Activated CD4-positive, alpha-beta memory T cell treated with anti-CD3 and anti-CD28 coated beads, Interleukin-2, amount 10 ng/mL, durations not matched to agents 7 days and 5 days (primary cell): ENCODE measurements at regions of chr17 and their contacts with region 1.

Region 1: DNA sequence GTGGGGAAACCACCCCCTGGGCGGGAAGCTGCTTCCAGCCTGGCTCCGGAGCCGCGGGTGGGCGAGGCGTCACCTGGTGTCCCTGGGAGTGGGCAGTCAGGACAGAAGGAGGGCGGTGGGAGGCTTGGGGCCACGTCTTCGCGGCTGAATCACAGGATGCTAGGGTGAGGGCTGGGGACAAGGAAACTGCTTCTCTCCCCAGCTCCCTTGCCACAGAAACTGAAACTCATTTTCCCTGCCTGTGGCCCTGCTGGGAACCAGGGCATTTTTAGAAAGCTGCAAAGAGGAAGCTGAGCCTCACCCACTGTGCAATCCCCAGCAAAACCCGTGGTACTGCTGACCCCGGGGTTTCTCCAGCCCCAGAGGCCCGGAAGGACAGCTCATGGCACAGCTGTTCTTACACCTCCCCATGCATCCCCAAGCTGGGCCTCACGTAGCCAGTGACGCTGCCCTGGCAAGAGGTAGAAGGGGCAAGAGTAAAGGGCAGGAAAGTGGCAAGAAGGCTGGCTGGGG is 8.2 kb downstream of the RHBDF2 start:
- DNase-seq: peak; percentile 67
- H3K4me3 Mint-ChIP-seq: peak overlapping the region; percentile 68
- H3K27ac Mint-ChIP-seq: peak overlapping the region; percentile 94
- H3K4me1 Mint-ChIP-seq: peaks cover 68% of the 10 kb centered on the region
- H3K27me3 Mint-ChIP-seq: no peaks in the 10 kb centered on the region

Region 2: DNA sequence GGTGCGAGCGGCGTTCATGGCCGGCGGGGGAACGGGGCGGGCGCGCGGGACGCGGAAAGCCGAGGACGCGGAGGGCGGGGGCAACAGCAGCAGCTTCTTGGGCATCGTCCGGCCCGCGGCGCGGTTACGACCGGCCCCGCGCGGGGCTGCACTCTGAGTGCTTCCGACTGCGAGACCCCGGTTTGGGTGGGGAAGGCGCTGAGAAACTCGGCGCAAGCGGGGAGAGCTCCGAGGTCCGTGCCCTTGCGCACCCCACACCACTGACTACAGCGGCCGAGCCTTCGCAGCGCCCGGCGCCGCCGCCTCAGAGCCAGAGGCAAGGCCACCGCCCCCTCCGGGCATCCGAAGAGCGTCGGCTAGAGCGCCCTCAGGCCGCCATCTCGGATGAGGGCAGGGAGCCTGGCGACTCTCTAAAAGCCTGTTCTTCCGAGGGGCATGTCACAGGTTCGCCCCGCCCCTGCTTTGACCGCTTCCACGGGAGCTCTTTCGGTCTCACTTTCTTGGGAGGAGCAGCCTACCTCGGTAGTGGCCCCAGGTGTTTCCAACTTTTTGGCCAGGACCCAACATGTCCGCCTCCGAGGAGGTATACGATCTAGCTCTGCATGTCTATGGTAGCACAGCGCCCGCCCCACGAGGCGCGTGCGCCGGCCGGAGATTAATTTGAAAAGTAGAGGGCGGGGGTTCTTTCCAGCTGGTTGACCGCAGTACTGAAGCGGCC is 139.3 kb before region 1 on chr17 and contains the start of gene PRPSAP1:
- CTCF ChIA-PET with region 1: no interaction called
- POLR2A ChIA-PET with region 1: interaction called, 11 read pairs
- DNase-seq: peak; percentile 84
- H3K4me3 Mint-ChIP-seq: peak within 1 kb of the TSS; percentile 94
- H3K27ac Mint-ChIP-seq: peak within 1 kb of the TSS; percentile 97
- H3K4me1 Mint-ChIP-seq: peaks cover 30% of the 10 kb centered on the region
- H3K27me3 Mint-ChIP-seq: no peaks in the 10 kb centered on the region
- total RNA-seq, gene PRPSAP1: 59.9 to 66.7 TPM

Region 3: GRCh38 chr17:76391200-76391715 is 101.8 kb before region 1 on chr17:
- CTCF ChIA-PET with region 1: no interaction called
- POLR2A ChIA-PET with region 1: no interaction called
- DNase-seq: no peak
- H3K4me3 Mint-ChIP-seq: no peak overlapping the region
- H3K27ac Mint-ChIP-seq: no peak overlapping the region
- H3K4me1 Mint-ChIP-seq: peaks cover under 1% of the 10 kb centered on the region
- H3K27me3 Mint-ChIP-seq: no peaks in the 10 kb centered on the region

Region 4: DNA sequence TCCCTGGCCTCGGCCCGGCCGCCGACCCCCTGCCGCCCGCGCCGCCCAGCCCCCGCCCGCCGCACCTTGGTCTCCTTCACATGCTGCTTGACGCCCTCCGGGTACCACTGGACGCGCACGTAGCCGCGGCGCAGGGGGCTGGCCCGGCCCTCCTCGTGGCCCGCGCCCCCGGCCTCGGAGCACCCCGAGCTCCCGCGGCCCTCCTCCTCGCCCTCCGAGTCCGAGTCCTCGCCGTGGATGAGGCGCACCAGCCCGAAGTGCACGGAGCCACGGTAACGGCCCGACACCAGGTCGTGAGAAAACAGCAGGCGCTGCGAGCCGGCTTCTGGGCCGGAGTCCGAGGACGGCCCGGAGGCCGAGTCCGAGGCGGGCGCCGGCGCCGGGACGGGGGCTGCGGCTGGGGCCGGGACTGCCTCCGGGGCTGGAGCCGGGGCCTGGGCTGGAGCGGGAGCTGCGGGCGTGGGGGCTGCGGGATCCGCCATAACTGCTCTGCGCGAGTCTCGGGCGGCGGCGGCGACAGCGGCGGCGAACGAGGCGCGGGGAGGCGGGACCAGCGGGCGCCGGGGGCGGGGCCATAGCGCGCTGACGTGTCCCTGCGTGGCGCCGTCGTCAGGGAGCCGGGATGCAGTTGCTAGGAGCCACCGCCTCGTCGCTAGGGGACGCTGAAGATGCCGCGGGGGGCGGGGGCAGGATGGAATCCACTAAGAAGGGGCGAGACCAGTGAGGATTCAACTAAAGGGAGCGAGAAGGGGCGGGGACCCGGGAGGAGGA is 40.2 kb before region 1 on chr17 and contains the start of gene UBE2O:
- CTCF ChIA-PET with region 1: interaction called, 3 read pairs
- POLR2A ChIA-PET with region 1: interaction called, 12 read pairs
- DNase-seq: peak; percentile 94
- H3K4me3 Mint-ChIP-seq: peak within 1 kb of the TSS; percentile 91
- H3K27ac Mint-ChIP-seq: peak within 1 kb of the TSS; percentile 37
- H3K4me1 Mint-ChIP-seq: peaks cover 41% of the 10 kb centered on the region
- H3K27me3 Mint-ChIP-seq: no peaks in the 10 kb centered on the region
- total RNA-seq, gene UBE2O: 26.5 to 28.9 TPM

Region 5: DNA sequence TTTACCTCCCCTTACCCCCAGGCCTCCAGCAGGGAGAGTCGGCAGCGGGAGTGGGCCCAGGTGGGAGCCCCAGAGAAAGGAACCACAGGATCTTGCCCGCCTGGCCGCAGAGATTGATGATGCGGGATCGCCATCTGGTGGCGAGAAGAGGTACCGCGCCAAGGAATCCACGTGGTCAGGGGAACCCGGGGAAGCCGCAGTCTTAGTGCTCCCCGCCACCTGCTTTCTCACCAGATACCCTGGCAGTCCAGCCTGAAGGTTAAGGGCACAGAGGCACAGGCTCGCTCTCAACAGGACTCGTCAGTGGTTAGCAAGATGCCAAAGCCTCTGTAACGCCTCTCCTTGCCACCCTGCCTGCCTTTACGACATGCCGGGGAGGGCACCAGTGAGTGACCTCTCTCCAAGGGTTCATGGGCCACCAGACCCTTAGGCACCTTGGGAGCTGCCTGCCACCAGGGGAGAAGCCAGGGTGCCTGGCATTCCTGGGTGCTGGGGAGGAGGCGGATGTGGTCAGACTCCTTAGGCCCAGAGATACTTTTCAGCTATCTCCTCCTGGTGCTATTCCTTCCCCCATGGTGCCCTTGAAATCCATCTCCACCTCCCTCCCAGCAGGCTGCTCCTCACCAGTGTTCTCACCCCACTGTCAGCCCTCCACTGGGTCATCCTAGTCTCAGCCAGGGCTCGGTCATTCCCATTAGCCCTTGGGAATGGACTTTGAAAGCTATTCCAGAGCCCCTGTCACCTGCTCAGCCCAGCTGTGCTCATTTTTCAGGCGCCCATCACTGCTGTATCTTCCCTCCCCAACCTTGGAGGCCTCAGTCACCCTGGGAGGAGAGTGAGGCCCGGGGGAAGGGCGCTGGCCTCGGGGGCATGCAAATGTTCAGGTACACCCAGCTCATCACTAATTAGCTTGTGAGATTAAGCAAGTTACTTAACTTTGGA is 13.6 kb after region 1 on chr17:
- CTCF ChIA-PET with region 1: interaction called, 46 read pairs
- POLR2A ChIA-PET with region 1: interaction called, 13 read pairs
- DNase-seq: peak; percentile 90
- H3K4me3 Mint-ChIP-seq: no peak overlapping the region
- H3K27ac Mint-ChIP-seq: no peak overlapping the region
- H3K4me1 Mint-ChIP-seq: peaks cover 40% of the 10 kb centered on the region
- H3K27me3 Mint-ChIP-seq: peaks cover 8% of the 10 kb centered on the region

Region 6: GRCh38 chr17:76515274-76515949 is 22.4 kb after region 1 on chr17:
- CTCF ChIA-PET with region 1: no interaction called
- POLR2A ChIA-PET with region 1: interaction called, 16 read pairs
- DNase-seq: peak; percentile 88
- H3K4me3 Mint-ChIP-seq: peak overlapping the region; percentile 58
- H3K27ac Mint-ChIP-seq: peak overlapping the region; percentile 99
- H3K4me1 Mint-ChIP-seq: peaks cover 60% of the 10 kb centered on the region
- H3K27me3 Mint-ChIP-seq: peaks cover under 1% of the 10 kb centered on the region

Region 7: DNA sequence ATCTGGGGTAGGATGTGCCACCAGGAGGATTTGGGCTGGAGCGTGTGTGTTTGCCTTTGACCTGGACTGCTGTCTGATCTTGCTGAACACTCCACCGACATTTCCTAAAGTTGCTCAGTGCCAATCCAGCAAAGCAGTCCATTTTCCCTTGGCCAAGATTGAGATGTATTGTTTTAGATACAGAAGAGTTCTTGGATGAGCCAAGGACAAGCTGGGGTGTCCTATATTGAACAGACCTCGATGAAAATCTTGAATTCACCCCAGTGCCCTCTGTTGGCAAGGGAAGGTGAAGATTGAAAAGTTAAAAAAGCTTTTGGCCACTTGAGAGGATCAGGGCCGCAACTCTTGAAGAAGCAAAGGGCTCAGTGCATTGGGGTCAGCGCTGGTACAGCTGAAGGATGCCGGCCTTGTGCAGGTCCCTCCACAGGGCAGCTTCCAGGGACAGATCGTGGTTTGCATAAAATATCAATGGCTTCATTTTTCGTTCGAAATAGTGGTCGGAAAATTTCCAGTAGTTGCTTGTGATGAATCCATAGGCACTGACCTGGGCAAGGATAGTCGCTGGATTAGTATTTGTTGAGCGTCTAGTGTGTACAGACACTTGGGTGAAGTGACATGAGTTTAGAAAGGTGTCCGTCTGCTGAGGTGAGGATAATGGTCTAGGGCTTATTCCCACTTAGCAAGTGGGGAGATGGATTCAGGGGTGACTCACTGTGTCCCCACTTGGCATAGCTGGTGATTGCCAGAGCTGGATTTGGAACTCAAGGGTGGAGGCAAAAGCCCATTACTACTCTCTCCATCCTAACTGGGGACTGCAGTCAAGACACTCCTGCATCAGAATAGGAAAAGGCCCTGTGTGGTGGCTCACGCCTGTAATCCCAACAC is 72.9 kb after region 1 on chr17:
- CTCF ChIA-PET with region 1: no interaction called
- POLR2A ChIA-PET with region 1: no interaction called
- DNase-seq: no peak
- H3K4me3 Mint-ChIP-seq: no peak overlapping the region
- H3K27ac Mint-ChIP-seq: no peak overlapping the region
- H3K4me1 Mint-ChIP-seq: peaks cover 30% of the 10 kb centered on the region
- H3K27me3 Mint-ChIP-seq: no peaks in the 10 kb centered on the region